ENCODE measurements at regions of chr4 and their contacts with region 1.

Region 1: DNA sequence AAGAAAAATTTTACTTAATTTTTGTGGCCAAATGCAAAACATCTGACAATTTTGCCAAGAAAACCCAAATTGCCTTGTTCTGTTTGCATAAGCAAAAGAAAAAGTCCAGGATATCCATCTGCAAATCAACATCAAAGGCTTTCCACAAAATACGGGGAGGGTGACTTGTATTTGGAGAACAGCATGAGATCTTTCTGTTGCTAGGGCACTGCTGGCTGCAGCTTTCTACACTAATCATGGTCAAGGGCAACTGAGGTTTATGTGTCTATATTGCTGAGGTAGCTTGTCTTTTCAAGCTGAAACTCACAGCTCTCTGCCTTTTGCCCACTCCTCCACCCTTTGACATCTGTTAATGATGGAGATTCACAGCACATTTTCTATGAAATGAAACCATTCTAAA is 389.1 kb downstream of the NKX6-1 start:
- DNase-seq: no peak
- H3K4me3 ChIP-seq: no peak overlapping the region
- H3K27ac ChIP-seq: no peak overlapping the region
- H3K4me1 ChIP-seq: no peaks in the 10 kb centered on the region
- H3K27me3 ChIP-seq: no peaks in the 10 kb centered on the region
- CTCF ChIP-seq: no peak

Region 2: GRCh38 chr4:84050015-84050414 is 60.0 kb before region 1 on chr4:
- CTCF ChIA-PET with region 1: interaction called, 19 read pairs
- POLR2A ChIA-PET with region 1: no interaction called
- intact Hi-C with region 1: no loop called
- DNase-seq: peak in 1 of 2 experiments; percentile 3
- H3K4me3 ChIP-seq: no peak overlapping the region
- H3K27ac ChIP-seq: no peak overlapping the region
- H3K4me1 ChIP-seq: no peaks in the 10 kb centered on the region
- H3K27me3 ChIP-seq: no peaks in the 10 kb centered on the region
- CTCF ChIP-seq: no peak